ENCODE measurements at regions of chr6 and their contacts with region 1.

Region 1: DNA sequence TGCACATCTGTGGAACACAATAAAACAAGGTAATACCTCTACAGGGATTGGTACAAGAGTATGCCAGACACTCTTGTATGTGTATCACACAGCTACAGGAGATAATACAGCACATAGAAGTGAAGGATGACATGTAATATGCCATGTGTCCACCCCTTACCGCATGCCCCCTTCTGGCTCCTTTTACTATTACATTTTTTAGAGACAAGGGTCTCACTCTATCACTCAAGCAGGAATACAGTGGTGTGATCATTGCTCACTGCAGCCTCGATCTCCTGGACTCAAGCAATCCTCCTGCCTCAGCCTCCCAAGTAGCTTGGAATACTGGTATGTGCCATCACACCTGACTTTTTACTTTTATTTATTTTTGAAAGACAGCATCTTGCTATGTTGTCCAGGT is 4.2 kb upstream of the NCR3 start:
- H3K4me3 Mint-ChIP-seq: no peak overlapping the region
- H3K27ac Mint-ChIP-seq: no peak overlapping the region
- H3K4me1 Mint-ChIP-seq: peaks cover 37% of the 10 kb centered on the region
- H3K27me3 Mint-ChIP-seq: no peaks in the 10 kb centered on the region

Region 2: DNA sequence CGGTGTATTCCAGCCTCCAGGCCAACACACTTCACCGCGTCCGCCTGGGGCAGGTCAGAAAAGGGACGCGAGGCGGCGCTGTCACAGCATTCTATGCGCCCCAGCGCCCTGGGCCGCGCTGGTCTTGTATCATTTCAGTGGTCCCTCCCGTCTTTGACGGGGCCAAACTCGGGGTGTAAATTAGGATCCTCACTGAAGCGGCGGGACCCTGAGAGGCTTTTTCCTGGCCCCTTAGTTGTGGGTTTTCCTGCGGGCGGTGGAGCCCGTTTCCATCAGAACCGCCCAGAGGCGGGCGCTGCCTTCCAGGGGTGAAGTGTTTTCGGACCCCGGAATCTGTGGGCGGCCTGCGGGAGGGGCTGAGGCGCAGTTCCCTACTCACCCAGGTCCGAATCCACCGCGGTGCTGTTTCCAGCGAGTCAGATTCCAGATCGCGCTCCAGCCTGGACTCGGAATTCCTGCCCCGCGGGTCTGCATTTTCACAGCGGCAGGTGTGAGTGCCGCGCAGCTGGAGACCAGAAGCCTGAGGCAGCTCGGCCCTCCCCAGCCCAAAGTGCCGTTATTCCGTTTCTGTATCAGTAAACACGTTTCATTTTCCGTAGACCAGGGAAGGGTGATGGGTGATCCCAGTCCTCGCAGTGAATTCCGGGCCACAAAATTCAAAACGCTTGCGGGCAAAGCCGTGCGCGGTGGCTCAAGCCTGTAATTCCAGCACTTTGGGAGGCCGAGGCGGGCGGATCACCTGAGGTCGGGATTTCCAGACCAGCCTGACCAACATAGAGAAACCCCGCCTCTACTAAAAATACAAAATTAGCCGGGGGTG is 102.9 kb before region 1 on chr6:
- intact Hi-C with region 1: loop called (anchors 5 kb)
- H3K4me3 Mint-ChIP-seq: peak overlapping the region; percentile 90
- H3K27ac Mint-ChIP-seq: peak overlapping the region; percentile 95
- H3K4me1 Mint-ChIP-seq: peaks cover 46% of the 10 kb centered on the region
- H3K27me3 Mint-ChIP-seq: no peaks in the 10 kb centered on the region

Region 3: DNA sequence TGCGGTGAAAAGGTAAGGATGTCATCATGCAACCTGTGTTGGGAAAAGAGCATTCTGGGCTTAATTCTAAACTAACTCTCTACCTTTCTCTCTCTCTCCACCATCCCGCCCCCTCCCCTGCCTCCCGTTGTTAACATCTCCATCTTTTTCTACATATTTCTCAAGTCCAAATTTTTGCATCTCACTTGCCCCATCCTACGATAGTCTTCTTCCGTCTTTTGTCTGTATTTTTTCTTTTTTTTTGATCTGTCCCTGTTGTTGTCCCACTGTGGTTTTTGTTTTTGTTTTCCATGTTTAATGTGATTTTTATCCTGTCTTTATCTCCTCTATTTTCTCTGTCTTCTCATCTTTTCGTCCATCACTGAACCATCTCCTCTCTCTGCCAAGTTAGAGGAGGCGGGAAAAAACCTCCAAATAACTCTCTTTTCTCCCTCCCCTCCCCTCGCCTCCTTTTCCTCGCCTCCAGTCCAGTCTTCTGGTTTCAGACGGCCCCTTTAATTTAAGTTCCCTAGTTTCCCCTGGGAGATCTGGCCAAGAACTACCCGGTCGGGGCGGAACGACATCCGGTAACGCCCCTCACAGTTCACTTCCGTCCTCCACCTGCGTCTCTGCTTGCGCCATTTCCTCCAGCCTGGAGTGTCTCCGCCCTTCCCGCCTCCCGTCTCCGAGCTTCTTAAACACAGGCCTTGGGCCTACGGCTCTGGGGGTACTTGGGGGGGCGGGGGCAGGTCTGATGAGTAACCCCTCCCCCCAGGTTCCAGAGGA is 49.9 kb before region 1 on chr6 and contains the start of gene NFKBIL1:
- intact Hi-C with region 1: loop called (anchors 1 kb)
- H3K4me3 Mint-ChIP-seq: peak within 1 kb of the TSS; percentile 77
- H3K27ac Mint-ChIP-seq: peak within 1 kb of the TSS; percentile 80
- H3K4me1 Mint-ChIP-seq: peaks cover 34% of the 10 kb centered on the region
- H3K27me3 Mint-ChIP-seq: no peaks in the 10 kb centered on the region

Region 4: GRCh38 chr6:31580807-31581433 is 16.1 kb before region 1 on chr6:
- intact Hi-C with region 1: loop called (anchors 1 kb)
- H3K4me3 Mint-ChIP-seq: peak overlapping the region; percentile 90
- H3K27ac Mint-ChIP-seq: peak overlapping the region; percentile 93
- H3K4me1 Mint-ChIP-seq: peaks cover 64% of the 10 kb centered on the region
- H3K27me3 Mint-ChIP-seq: no peaks in the 10 kb centered on the region